ENCODE measurements at regions of chr3 and their contacts with region 1.

Region 1: GRCh38 chr3:21484057-21484827 is 266.8 kb downstream of the ZNF385D start:
- DNase-seq: peak; percentile 21
- H3K4me3 ChIP-seq: no peak overlapping the region
- H3K27ac ChIP-seq: no peak overlapping the region
- H3K4me1 ChIP-seq: no peaks in the 10 kb centered on the region
- H3K27me3 ChIP-seq: no peaks in the 10 kb centered on the region
- CTCF ChIP-seq: peak; percentile 41

Region 2: DNA sequence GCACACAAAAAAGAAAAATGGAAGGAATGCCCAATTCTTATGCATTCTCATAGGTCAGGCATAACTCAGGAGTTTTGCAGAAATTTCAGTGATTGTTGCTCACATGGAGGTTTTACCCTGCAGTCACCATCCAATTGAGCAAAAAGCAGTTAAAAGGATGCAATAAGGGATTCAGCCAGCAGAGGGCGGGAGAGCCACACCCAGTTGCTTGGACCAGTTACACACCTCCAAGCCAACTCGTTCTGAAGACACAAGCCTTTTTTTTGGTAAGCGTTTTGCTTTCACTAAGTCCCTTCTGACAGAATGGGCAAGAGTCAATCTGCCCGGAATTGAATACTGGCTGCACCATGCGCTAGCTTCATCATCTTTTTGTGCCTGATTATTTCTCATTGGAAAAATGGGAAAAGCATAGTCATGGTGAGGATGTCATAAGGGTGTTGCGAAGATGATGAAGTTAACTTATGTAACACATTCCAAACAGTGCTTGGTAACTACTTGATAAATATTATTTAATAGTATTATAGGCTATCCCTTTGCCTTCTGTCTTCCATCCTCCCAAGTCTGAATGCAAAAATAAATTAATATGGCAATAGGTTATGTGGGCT is 1143.8 kb before region 1 on chr3:
- CTCF ChIA-PET with region 1: no interaction called
- POLR2A ChIA-PET with region 1: no interaction called
- intact Hi-C with region 1: loop called (anchors 10 kb)
- DNase-seq: peak; percentile 69
- H3K4me3 ChIP-seq: no peak overlapping the region
- H3K27ac ChIP-seq: no peak overlapping the region
- H3K4me1 ChIP-seq: no peaks in the 10 kb centered on the region
- H3K27me3 ChIP-seq: no peaks in the 10 kb centered on the region
- CTCF ChIP-seq: peak; percentile 83

Region 3: GRCh38 chr3:21294768-21295167 is 189.5 kb before region 1 on chr3:
- CTCF ChIA-PET with region 1: no interaction called
- POLR2A ChIA-PET with region 1: no interaction called
- intact Hi-C with region 1: no loop called
- DNase-seq: no peak
- H3K4me3 ChIP-seq: no peak overlapping the region
- H3K27ac ChIP-seq: no peak overlapping the region
- H3K4me1 ChIP-seq: no peaks in the 10 kb centered on the region
- H3K27me3 ChIP-seq: no peaks in the 10 kb centered on the region
- CTCF ChIP-seq: no peak

Region 4: GRCh38 chr3:21502656-21503055 is 18.4 kb after region 1 on chr3:
- CTCF ChIA-PET with region 1: no interaction called
- POLR2A ChIA-PET with region 1: no interaction called
- intact Hi-C with region 1: no loop called
- DNase-seq: no peak
- H3K4me3 ChIP-seq: no peak overlapping the region
- H3K27ac ChIP-seq: no peak overlapping the region
- H3K4me1 ChIP-seq: no peaks in the 10 kb centered on the region
- H3K27me3 ChIP-seq: no peaks in the 10 kb centered on the region
- CTCF ChIP-seq: no peak